GM12878 (cell line): ENCODE measurements at regions of chr10 and their contacts with region 1.

Region 1: GRCh38 chr10:58282615-58283014 is 13.7 kb downstream of the CISD1 start:
- DNase-seq: peak; percentile 70
- ATAC-seq: peak; percentile 94
- H3K4me3 ChIP-seq: no peak overlapping the region; the same call in 1 of the 2 replicates
- H3K27ac ChIP-seq: peak overlapping the region; percentile 30
- H3K4me1 ChIP-seq: peaks cover 13% of the 10 kb centered on the region
- H3K27me3 ChIP-seq: no peaks in the 10 kb centered on the region
- CTCF ChIP-seq: no peak
- EP300 ChIP-seq: peak in 1 of 2 experiments; percentile 86; a peak in 2 of 4 replicates
- POLR2A ChIP-seq: no peak
- RAD21 ChIP-seq: no peak

Region 2: GRCh38 chr10:58268870-58269605 is 13.6 kb before region 1 on chr10 and contains the start of gene CISD1:
- CTCF ChIA-PET with region 1: interaction called, 4 read pairs
- POLR2A ChIA-PET with region 1: interaction called, 3 read pairs
- RAD21 ChIA-PET with region 1: interaction called, 4 read pairs
- SMC1A ChIA-PET with region 1: interaction called, 5 read pairs
- in situ Hi-C with region 1: no loop called
- intact Hi-C with region 1: loop called (anchors 2 kb)
- DNase-seq: peak; percentile 96
- ATAC-seq: peak; percentile 76
- H3K4me3 ChIP-seq: peak within 1 kb of the TSS; percentile 76
- H3K27ac ChIP-seq: peak within 1 kb of the TSS; percentile 86
- H3K4me1 ChIP-seq: 0 out of 2 replicates have a peak, but pooled peaks cover 5% of the 10 kb centered on the region
- H3K27me3 ChIP-seq: no peaks in the 10 kb centered on the region
- CTCF ChIP-seq: no peak
- EP300 ChIP-seq: no peak
- POLR2A ChIP-seq: peak; percentile 93
- RAD21 ChIP-seq: no peak
- polyA plus RNA-seq, gene CISD1: 156 to 162 TPM